Ascending aorta (tissue), 2 donors: ENCODE measurements at regions of chr2 and their contacts with region 1.

Region 1: DNA sequence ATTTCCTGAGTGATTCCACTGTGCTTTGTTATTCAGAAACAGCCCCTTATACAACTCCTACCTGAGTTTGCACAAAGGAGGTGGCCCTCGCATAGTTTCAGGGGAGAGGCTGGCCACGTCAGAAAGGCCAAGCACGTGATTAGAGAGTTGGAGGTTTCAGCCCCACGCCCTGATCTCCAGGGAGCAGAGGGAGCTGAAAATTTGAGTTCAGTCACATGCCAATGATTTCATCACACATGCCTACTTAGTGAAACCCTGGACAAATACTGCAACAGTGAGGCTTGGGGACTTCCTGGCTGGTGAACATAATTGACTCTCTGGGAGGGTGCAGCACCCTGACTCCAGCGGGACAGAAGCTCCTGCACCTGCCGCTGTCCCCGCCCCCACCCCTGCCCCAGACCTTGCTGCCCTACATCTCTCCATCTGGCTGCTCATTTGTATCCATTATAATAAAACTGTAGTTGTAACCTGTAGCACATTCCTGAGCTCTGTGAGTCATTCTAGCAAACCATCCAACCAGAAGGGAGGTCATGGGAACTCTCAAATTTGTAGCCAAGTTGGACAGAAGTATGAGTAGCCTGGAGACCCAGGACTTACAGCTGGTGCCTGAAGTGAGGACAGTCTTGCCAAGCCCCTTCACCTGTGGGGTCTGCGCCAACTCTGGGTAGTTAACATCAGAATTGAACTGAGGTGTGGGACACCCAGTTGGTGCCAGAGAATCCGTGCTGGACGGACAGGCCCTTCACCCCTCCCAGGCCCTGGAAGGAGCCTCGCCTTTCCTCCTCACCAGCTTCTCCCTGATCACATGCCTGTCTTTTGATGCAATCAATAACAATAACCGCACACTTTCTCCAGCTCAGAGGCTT is 224.3 kb downstream of the ANAPC1 start:
- DNase-seq: peak; percentile 39 to 88
- H3K4me3 ChIP-seq: no peak overlapping the region
- H3K27ac ChIP-seq: peak overlapping the region; percentile 73 to 92
- H3K4me1 ChIP-seq: peaks cover 7 to 13% of the 10 kb centered on the region in 2 donors
- H3K27me3 ChIP-seq: no peaks in the 10 kb centered on the region
- CTCF ChIP-seq: no peak

Region 2: DNA sequence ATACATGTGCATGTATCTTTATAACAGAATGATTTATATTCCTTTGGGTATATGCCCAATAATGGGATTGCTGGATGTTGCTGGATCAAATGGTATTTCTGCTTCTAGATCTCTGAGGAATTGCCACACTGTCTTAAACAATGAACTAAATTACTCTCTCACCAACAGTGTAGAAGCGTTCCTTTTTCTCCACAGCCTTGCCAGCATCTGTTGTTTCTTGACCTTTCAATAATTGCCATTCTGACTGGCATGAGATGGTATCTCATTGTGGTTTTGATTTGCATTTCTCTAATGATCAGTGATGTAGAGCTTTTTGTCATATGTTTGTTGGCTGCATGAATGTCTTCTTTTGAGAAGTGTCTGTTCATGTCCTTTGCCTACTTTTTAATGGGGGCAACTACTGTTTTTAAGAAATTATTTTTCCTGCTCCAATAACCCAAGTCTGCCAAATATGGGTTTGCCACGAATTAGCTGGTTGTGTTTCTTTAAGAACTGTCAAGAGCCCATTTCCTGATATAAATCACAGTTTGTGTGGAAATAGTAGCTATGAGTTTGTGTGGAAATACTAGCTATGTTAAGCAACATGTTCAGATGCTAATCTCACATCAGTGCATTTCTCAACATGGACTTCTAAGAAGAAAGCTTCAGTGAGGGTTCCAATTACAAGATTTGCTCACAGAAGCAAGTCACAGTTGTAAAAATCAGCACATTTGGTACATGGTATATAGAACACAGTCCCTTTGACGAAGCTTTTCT is 35.1 kb before region 1 on chr2:
- intact Hi-C with region 1: loop called (anchors 5 kb)
- DNase-seq: no peak
- H3K4me3 ChIP-seq: no peak overlapping the region
- H3K27ac ChIP-seq: no peak overlapping the region
- H3K4me1 ChIP-seq: peaks cover 0 to 8% of the 10 kb centered on the region in 2 donors
- H3K27me3 ChIP-seq: no peaks in the 10 kb centered on the region
- CTCF ChIP-seq: no peak

Region 3: GRCh38 chr2:111642586-111643327 is 16.9 kb before region 1 on chr2:
- intact Hi-C with region 1: no loop called
- DNase-seq: no peak
- H3K4me3 ChIP-seq: no peak overlapping the region
- H3K27ac ChIP-seq: no peak overlapping the region
- H3K4me1 ChIP-seq: no peaks in the 10 kb centered on the region
- H3K27me3 ChIP-seq: no peaks in the 10 kb centered on the region
- CTCF ChIP-seq: no peak